ENCODE measurements at regions of chr10 and their contacts with region 1.

Region 1: DNA sequence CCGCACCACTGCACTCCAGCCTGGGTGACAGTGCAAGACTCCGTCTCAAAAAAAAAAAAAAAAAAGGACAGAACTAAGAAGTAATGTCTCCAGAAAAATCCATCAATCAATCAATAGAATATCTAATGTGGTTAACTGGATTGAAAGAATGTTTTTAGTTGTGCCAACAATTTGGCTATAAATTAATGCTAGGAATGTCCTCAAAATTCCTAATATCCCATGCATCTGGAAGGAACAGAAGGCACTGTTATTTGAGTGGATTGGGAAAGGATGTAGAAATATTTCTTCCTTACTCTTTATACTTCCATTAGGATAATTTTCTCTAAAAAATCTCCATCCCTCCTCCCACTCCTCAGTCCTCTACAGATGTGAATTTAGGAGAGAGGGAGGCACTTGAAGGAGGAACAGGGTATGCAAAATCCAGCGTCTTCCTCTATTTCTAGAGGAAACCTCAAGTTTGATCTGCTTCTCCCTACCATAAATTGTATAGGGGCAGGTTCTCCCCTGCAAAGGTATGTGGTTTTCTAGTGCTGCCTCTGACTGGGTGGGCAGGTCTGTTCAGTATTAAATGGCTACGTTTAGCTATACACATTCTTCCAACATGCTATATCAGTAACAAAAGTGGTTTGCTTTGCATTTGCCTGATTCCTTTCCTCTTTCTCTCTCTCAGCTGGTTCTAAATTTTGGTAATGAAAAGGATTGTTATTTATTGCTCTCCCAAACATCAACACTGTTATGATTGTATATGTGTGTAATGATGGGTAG is 54.1 kb downstream of the RNLS start:
- DNase-seq: no peak
- H3K4me3 ChIP-seq: no peak overlapping the region
- H3K27ac ChIP-seq: no peak overlapping the region
- H3K4me1 ChIP-seq: peaks cover 14% of the 10 kb centered on the region
- H3K27me3 ChIP-seq: no peaks in the 10 kb centered on the region
- CTCF ChIP-seq: no peak

Region 2: DNA sequence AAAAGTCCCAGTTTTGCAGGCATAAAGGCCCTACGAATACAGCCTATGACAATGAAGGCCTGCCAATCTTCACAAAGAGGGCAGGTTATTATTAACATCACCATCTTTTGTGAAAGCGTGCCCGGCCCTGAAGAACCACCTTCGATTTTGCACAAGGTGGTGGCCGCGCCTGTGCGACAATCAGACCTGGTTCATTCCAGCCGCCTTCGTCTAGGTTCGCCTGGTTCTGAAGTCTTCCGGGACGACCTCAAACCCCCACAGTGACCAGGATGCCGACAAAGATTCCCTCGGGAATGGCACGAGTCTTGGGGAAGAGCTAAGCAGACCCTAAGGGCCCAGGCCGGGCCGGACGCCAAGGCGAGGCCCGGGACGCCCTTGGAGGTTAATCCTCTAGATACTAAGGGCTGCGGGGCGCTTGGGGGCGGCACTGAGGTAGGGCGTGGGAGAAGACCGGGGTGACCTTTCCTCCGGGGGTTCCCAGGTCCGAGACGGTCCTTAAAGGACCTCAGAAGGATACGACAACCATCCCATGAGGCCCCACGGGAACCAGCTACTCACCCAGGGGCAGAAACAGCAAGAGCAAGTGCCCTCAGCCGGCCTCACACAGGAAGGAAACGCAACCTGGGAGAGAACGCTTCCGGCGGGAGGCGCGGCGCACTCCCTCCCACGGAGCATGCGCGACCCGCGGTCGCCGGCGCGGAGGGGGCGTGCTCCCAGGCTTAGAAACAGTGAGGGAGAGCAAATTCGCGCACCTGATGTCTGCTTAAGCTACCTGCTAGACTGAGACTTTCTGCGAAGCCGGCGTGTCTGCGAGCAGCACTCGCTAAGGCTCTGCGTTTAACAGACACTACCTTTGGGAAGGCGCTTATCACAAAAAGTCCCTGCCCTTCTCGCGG is 711.1 kb before region 1 on chr10 and contains the start of gene ATAD1:
- CTCF ChIA-PET with region 1: no interaction called
- POLR2A ChIA-PET with region 1: interaction called, 18 read pairs
- intact Hi-C with region 1: no loop called
- DNase-seq: peak; percentile 73 to 81
- H3K4me3 ChIP-seq: peak within 1 kb of the TSS; percentile 88
- H3K27ac ChIP-seq: peak within 1 kb of the TSS; percentile 80
- H3K4me1 ChIP-seq: peaks cover 24% of the 10 kb centered on the region
- H3K27me3 ChIP-seq: no peaks in the 10 kb centered on the region
- CTCF ChIP-seq: no peak
- total RNA-seq, gene ATAD1: 21.8 and 26.3 TPM in 2 replicates

Region 3: GRCh38 chr10:88687853-88688467 is 159.0 kb after region 1 on chr10:
- CTCF ChIA-PET with region 1: no interaction called
- POLR2A ChIA-PET with region 1: no interaction called
- intact Hi-C with region 1: no loop called
- DNase-seq: no peak
- H3K4me3 ChIP-seq: no peak overlapping the region
- H3K27ac ChIP-seq: no peak overlapping the region
- H3K4me1 ChIP-seq: no peaks in the 10 kb centered on the region
- H3K27me3 ChIP-seq: no peaks in the 10 kb centered on the region
- CTCF ChIP-seq: peak; percentile 86

Region 4: GRCh38 chr10:88820748-88821389 is 291.9 kb after region 1 on chr10:
- CTCF ChIA-PET with region 1: no interaction called
- POLR2A ChIA-PET with region 1: no interaction called
- intact Hi-C with region 1: no loop called
- DNase-seq: no peak
- H3K4me3 ChIP-seq: no peak overlapping the region
- H3K27ac ChIP-seq: 0 out of 2 replicates have a peak overlapping the region, but pooled peaks have one; percentile 26
- H3K4me1 ChIP-seq: no peaks in the 10 kb centered on the region
- H3K27me3 ChIP-seq: no peaks in the 10 kb centered on the region
- CTCF ChIP-seq: no peak

Region 5: GRCh38 chr10:88901206-88901983 is 372.4 kb after region 1 on chr10:
- CTCF ChIA-PET with region 1: no interaction called
- POLR2A ChIA-PET with region 1: no interaction called
- intact Hi-C with region 1: no loop called
- DNase-seq: no peak
- H3K4me3 ChIP-seq: no peak overlapping the region
- H3K27ac ChIP-seq: no peak overlapping the region; the same call in 1 of the 2 replicates
- H3K4me1 ChIP-seq: peaks cover 19% of the 10 kb centered on the region
- H3K27me3 ChIP-seq: no peaks in the 10 kb centered on the region
- CTCF ChIP-seq: no peak